ENCODE measurements at regions of chr3 and their contacts with region 1.

Region 1: DNA sequence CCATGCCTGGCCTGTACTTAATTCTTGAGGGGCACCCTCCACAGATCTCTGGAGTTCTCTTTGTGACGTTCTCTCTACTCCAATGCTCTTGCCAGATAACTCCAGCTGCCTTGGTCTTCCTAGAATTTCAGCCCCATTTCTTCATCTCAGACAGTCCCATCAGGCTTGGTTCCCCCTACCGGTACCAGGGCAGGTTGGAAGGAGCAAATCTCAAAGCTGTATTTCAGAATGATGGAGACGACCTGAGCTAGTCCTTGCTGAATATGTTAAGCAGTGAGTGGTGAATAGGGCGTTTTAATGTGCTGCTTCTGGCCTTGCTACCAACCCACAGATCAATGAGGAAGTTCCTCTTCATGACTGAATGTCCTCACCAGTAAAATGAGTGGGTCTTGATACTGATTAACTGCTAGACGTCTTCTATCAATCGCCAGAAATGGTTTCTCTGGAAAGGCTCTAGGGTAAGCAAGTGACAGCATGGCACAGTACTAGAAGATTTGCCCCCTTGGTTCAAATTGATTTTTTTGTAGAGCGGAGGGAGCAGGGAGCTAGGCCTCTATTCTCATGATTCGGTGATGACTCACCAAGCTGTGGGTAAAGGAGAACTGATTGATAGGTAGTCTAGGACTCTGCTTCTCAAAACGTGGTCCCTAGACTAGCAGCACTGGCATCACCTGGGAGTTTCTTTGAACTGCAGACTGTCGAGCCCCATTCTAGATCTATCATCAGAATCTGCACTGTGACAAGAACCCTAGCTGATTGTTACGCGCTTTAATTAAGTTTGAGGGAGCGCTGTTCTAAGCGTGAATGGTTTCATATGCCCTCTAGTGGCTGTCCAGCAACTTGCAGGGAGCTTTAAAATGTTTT is 67.8 kb downstream of the UBP1 start:
- DNase-seq: peak in 1 of 2 experiments; percentile 53
- H3K4me3 ChIP-seq: no peak overlapping the region
- H3K4me3 Mint-ChIP-seq: no peak overlapping the region
- H3K27ac Mint-ChIP-seq: no peak overlapping the region
- H3K4me1 ChIP-seq: peaks cover 8% of the 10 kb centered on the region
- H3K4me1 Mint-ChIP-seq: no peaks in the 10 kb centered on the region
- H3K27me3 ChIP-seq: no peaks in the 10 kb centered on the region
- H3K27me3 Mint-ChIP-seq: no peaks in the 10 kb centered on the region
- CTCF ChIP-seq: peak; percentile 84

Region 2: DNA sequence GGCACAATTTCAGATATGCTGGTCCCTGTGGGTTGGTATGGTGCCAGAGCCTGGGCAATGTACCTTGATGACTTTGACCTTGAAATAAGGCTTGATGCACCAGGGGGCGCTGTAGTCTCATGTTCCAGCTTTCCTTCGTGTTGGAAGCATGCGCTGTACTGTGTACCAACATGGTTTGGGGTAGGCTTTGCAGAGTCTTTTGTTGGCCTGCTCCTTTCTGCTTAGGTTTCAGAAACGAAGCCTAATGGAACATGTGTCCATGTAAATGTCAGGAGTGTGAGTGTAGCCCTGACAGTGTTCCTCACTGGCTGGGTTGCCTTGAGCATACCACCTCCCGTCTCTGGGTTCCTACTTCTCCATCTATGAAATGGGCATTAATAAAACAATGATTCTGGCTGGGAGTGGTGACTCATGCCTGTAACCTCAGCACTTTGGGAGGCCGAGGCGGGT is 424.6 kb before region 1 on chr3:
- CTCF ChIA-PET with region 1: no interaction called
- POLR2A ChIA-PET with region 1: no interaction called
- intact Hi-C with region 1: loop called (anchors 1 kb)
- DNase-seq: peak; percentile 82 to 85
- H3K4me3 ChIP-seq: no peak overlapping the region
- H3K4me3 Mint-ChIP-seq: no peak overlapping the region
- H3K27ac Mint-ChIP-seq: no peak overlapping the region
- H3K4me1 ChIP-seq: no peaks in the 10 kb centered on the region
- H3K4me1 Mint-ChIP-seq: peaks cover 10% of the 10 kb centered on the region
- H3K27me3 ChIP-seq: no peaks in the 10 kb centered on the region; the same call in 1 of the 2 replicates
- H3K27me3 Mint-ChIP-seq: no peaks in the 10 kb centered on the region
- CTCF ChIP-seq: peak; percentile 54 to 82

Region 3: GRCh38 chr3:33250712-33251111 is 121.7 kb before region 1 on chr3:
- CTCF ChIA-PET with region 1: no interaction called
- POLR2A ChIA-PET with region 1: no interaction called
- intact Hi-C with region 1: loop called (anchors 5 kb)
- DNase-seq: no peak
- H3K4me3 ChIP-seq: no peak overlapping the region
- H3K4me3 Mint-ChIP-seq: no peak overlapping the region
- H3K27ac Mint-ChIP-seq: no peak overlapping the region
- H3K4me1 ChIP-seq: no peaks in the 10 kb centered on the region
- H3K4me1 Mint-ChIP-seq: no peaks in the 10 kb centered on the region
- H3K27me3 ChIP-seq: no peaks in the 10 kb centered on the region
- H3K27me3 Mint-ChIP-seq: peaks cover 2% of the 10 kb centered on the region
- CTCF ChIP-seq: no peak

Region 4: DNA sequence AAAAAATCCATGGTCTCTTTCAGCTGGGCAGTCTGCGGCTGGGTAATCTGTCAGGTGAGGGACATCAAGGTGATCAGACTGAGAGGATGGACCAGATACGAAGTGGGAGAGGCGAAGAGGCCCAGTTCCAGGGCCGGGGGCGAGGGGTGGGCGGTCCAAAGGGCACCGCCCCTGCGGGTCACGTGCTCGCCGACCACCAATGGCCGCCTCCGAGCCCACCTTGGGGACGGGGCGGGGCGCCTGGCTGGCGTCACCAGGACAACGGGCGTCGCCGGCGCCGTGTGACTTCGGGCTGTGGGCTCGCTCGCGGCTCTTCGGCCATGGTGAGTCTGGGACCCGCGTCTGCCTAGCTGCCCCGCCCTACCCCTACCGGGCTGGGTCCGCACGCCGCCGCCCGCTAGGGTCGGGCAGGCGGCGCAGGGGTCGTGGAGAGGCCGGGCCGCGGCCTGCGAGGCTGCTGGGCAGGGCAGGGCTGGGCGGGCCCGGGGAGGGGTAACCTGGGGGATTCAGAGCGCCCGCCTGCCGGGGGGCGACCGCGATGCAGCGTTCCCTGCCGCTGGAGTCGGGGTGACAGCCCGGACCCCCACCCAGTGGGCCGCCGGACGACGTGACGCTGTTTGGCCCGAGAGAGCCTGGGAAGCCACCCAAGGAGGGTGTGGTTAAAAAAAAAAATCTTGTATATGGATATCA is 95.1 kb before region 1 on chr3 and contains the start of gene FBXL2:
- CTCF ChIA-PET with region 1: interaction called, 5 read pairs
- POLR2A ChIA-PET with region 1: interaction called, 3 read pairs
- intact Hi-C with region 1: loop called (anchors 5 kb)
- DNase-seq: peak; percentile 91 to 96
- H3K4me3 ChIP-seq: peak within 1 kb of the TSS; percentile 86
- H3K4me3 Mint-ChIP-seq: peak within 1 kb of the TSS; percentile 71
- H3K27ac Mint-ChIP-seq: peak within 1 kb of the TSS; percentile 9
- H3K4me1 ChIP-seq: no peaks in the 10 kb centered on the region
- H3K4me1 Mint-ChIP-seq: no peaks in the 10 kb centered on the region
- H3K27me3 ChIP-seq: no peaks in the 10 kb centered on the region
- H3K27me3 Mint-ChIP-seq: no peaks in the 10 kb centered on the region
- CTCF ChIP-seq: no peak
- total RNA-seq, gene FBXL2: 8.5 and 10.8 TPM in 2 replicates

Region 5: GRCh38 chr3:33318709-33319380 is 53.6 kb before region 1 on chr3:
- CTCF ChIA-PET with region 1: interaction called, 12 read pairs
- POLR2A ChIA-PET with region 1: no interaction called
- intact Hi-C with region 1: loop called (anchors 2 kb)
- DNase-seq: peak in 1 of 2 experiments; percentile 51
- H3K4me3 ChIP-seq: no peak overlapping the region
- H3K4me3 Mint-ChIP-seq: peak overlapping the region; percentile 65
- H3K27ac Mint-ChIP-seq: peak overlapping the region; percentile 80
- H3K4me1 ChIP-seq: peaks cover 34% of the 10 kb centered on the region
- H3K4me1 Mint-ChIP-seq: peaks cover 34% of the 10 kb centered on the region
- H3K27me3 ChIP-seq: no peaks in the 10 kb centered on the region
- H3K27me3 Mint-ChIP-seq: no peaks in the 10 kb centered on the region
- CTCF ChIP-seq: peak in 1 of 2 experiments; percentile 47

Region 6: GRCh38 chr3:33355611-33356010 is 16.8 kb before region 1 on chr3:
- CTCF ChIA-PET with region 1: interaction called, 13 read pairs
- POLR2A ChIA-PET with region 1: no interaction called
- intact Hi-C with region 1: no loop called
- DNase-seq: peak; percentile 59 to 71
- H3K4me3 ChIP-seq: no peak overlapping the region
- H3K4me3 Mint-ChIP-seq: peak overlapping the region; percentile 60
- H3K27ac Mint-ChIP-seq: peak overlapping the region; percentile 27
- H3K4me1 ChIP-seq: peaks cover 17% of the 10 kb centered on the region
- H3K4me1 Mint-ChIP-seq: peaks cover 6% of the 10 kb centered on the region
- H3K27me3 ChIP-seq: no peaks in the 10 kb centered on the region
- H3K27me3 Mint-ChIP-seq: no peaks in the 10 kb centered on the region
- CTCF ChIP-seq: no peak

Measured in Caco-2 (cell line).